CD8-positive, alpha-beta T cell (primary cell): ENCODE measurements at regions of chr4 and their contacts with region 1.

Region 1: GRCh38 chr4:15778289-15779241 is at the start of gene CD38:
- DNase-seq: peak; percentile 16 to 65 (median 52)
- ATAC-seq: peak; percentile 49
- H3K4me3 ChIP-seq: peak within 1 kb of the TSS; percentile 57 to 74
- H3K4me3 Mint-ChIP-seq: peak within 1 kb of the TSS; percentile 85
- H3K27ac ChIP-seq: peak within 1 kb of the TSS in 1 of 2 experiments; percentile 32
- H3K27ac Mint-ChIP-seq: peak within 1 kb of the TSS; percentile 68
- H3K4me1 ChIP-seq: peaks cover 29% of the 10 kb centered on the region
- H3K4me1 Mint-ChIP-seq: peaks cover 56% of the 10 kb centered on the region
- H3K27me3 ChIP-seq: no peaks in the 10 kb centered on the region
- H3K27me3 Mint-ChIP-seq: no peaks in the 10 kb centered on the region
- CTCF ChIP-seq: no peak
- total RNA-seq, gene CD38: 3.5 to 6.2 TPM

Region 2: GRCh38 chr4:15729910-15730533 is 48.5 kb before region 1 on chr4:
- CTCF ChIA-PET with region 1: interaction called, 3 read pairs
- POLR2A ChIA-PET with region 1: no interaction called
- intact Hi-C with region 1: loop called in 1 of 2 experiments (anchors 2 kb)
- DNase-seq: peak in 6 of 9 experiments; percentile 10 to 71 (median 28)
- ATAC-seq: peak; percentile 70
- H3K4me3 ChIP-seq: no peak overlapping the region
- H3K4me3 Mint-ChIP-seq: no peak overlapping the region
- H3K27ac ChIP-seq: no peak overlapping the region
- H3K27ac Mint-ChIP-seq: no peak overlapping the region
- H3K4me1 ChIP-seq: no peaks in the 10 kb centered on the region
- H3K4me1 Mint-ChIP-seq: peaks cover 20% of the 10 kb centered on the region
- H3K27me3 ChIP-seq: no peaks in the 10 kb centered on the region
- H3K27me3 Mint-ChIP-seq: peaks cover 2% of the 10 kb centered on the region
- CTCF ChIP-seq: peak; percentile 100